Panc1 (cell line): ENCODE measurements at regions of chr1 and their contacts with region 1.

Region 1: GRCh38 chr1:168082008-168082876 is 54.5 kb downstream of the GPR161 start:
- DNase-seq: peak; percentile 63
- ATAC-seq: peak; percentile 92
- H3K4me3 ChIP-seq: no peak overlapping the region
- H3K27ac ChIP-seq: no peak overlapping the region
- H3K4me1 ChIP-seq: no peaks in the 10 kb centered on the region
- H3K27me3 ChIP-seq: no peaks in the 10 kb centered on the region
- CTCF ChIP-seq: peak; percentile 94

Region 2: GRCh38 chr1:167899253-167899681 is 183.0 kb before region 1 on chr1:
- CTCF ChIA-PET with region 1: interaction called, 11 read pairs
- POLR2A ChIA-PET with region 1: no interaction called
- in situ Hi-C with region 1: no loop called
- intact Hi-C with region 1: no loop called
- DNase-seq: no peak
- ATAC-seq: no peak
- H3K4me3 ChIP-seq: no peak overlapping the region
- H3K27ac ChIP-seq: no peak overlapping the region
- H3K4me1 ChIP-seq: no peaks in the 10 kb centered on the region
- H3K27me3 ChIP-seq: no peaks in the 10 kb centered on the region
- CTCF ChIP-seq: no peak

Region 3: DNA sequence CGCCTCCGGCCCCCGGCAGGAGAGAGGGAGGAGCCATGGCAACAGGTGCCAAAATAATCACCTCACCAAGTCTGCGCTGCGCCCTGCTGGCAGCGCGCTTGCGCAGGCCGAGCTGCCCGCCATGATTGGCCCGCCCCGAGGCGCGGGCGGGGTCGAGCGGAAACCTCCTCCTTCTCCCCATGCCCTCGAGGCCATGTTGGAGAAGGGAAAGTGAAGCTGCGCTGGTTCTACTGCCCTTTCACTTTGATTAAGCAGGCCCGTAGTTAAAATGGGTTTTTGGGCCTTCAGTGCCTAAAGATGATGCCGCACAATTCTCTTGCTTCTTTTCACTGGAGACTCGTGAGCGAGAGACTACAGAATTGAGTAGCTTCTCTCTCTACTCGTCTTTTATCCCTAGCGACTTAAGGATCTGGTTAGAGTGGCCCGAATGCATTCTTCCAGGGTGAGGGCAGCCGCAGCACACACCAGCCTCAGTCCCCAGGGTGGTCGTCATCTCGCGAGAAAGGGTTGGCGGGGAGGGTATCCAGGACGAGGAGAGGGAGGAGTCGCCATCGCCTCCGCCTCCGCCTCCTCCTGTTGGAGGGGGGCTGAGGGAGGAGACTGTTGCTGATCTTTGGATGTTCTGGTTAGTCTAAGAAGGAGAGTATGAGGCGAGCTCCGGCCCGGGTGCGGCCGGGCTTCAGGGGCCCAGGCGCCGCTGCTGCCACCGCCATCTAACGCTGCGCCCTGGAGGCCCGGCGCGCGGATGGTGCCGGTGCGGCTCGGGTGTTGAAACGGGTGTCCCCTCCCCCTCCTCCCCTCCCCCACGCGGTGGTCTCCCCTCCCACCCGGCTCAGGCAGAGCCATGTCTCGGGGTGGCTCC is 145.9 kb before region 1 on chr1 and contains the start of gene DCAF6:
- CTCF ChIA-PET with region 1: interaction called, 14 read pairs
- POLR2A ChIA-PET with region 1: no interaction called
- in situ Hi-C with region 1: no loop called
- intact Hi-C with region 1: no loop called
- DNase-seq: peak; percentile 91
- ATAC-seq: peak; percentile 91
- H3K4me3 ChIP-seq: peak within 1 kb of the TSS; percentile 95 to 96
- H3K27ac ChIP-seq: peak within 1 kb of the TSS; percentile 99
- H3K4me1 ChIP-seq: peaks cover 29% of the 10 kb centered on the region
- H3K27me3 ChIP-seq: no peaks in the 10 kb centered on the region
- CTCF ChIP-seq: no peak
- total RNA-seq, gene DCAF6: 67.7 TPM